Dendritic cell treated with granulocyte-macrophage colony-stimulating factor and Interleukin-4, amounts not matched to agents 40 ng/mL and 50 ng/mL, for 4 days (primary cell): ENCODE measurements at regions of chr3 and their contacts with region 1.

Region 1: GRCh38 chr3:51591231-51591630 is 52.7 kb downstream of the RAD54L2 start:
- H3K4me3 Mint-ChIP-seq: no peak overlapping the region
- H3K27ac Mint-ChIP-seq: no peak overlapping the region
- H3K4me1 Mint-ChIP-seq: peaks cover 6% of the 10 kb centered on the region
- H3K27me3 Mint-ChIP-seq: no peaks in the 10 kb centered on the region

Region 2: GRCh38 chr3:51559411-51559888 is 31.8 kb before region 1 on chr3:
- intact Hi-C with region 1: loop called (anchors 2 kb)
- H3K4me3 Mint-ChIP-seq: no peak overlapping the region
- H3K27ac Mint-ChIP-seq: no peak overlapping the region
- H3K4me1 Mint-ChIP-seq: peaks cover 8% of the 10 kb centered on the region
- H3K27me3 Mint-ChIP-seq: no peaks in the 10 kb centered on the region

Region 3: DNA sequence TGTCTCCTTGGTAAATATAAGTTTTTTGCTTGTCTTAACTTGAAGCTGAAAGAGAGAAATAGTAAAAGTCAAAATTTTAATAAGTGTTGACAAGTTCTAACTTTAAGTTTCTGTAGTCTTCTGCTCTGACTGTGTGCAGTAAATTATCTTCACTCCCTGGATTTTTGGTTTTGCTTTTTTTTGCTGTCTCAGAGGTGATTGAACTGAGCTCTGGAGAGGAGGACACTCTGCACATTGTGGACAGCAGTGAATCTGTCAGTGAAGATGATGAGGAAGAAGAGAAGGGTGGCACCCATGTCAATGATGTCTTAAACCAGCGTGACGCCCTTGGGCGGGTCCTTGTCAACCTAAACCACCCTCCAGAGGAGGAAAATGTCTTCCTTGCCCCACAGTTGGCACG is 39.3 kb after region 1 on chr3:
- intact Hi-C with region 1: no loop called
- H3K4me3 Mint-ChIP-seq: no peak overlapping the region
- H3K27ac Mint-ChIP-seq: no peak overlapping the region
- H3K4me1 Mint-ChIP-seq: no peaks in the 10 kb centered on the region
- H3K27me3 Mint-ChIP-seq: no peaks in the 10 kb centered on the region

Region 4: DNA sequence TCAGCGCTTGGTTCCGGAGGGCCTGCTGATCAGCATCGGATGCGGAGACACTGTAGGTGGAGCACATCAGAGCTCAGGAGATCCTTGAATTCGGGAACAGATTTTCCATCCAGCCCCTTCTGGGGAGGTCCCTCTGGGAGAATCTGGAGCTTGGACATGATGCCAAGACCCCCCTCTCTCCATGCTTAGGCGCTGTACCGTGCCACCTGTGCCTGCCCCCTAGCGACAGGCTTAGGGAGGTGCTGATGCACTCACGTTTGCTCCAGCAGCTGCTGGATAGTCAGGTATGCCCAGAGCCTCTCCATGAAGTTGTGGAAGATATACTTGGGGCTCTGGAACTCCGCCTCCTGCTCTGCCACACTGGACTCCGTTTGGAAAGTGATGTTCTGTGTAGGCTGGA is 1229.5 kb after region 1 on chr3:
- intact Hi-C with region 1: no loop called
- H3K4me3 Mint-ChIP-seq: no peak overlapping the region
- H3K27ac Mint-ChIP-seq: no peak overlapping the region
- H3K4me1 Mint-ChIP-seq: no peaks in the 10 kb centered on the region
- H3K27me3 Mint-ChIP-seq: no peaks in the 10 kb centered on the region